Caco-2 (cell line): ENCODE measurements at regions of chr13 and their contacts with region 1.

Region 1: DNA sequence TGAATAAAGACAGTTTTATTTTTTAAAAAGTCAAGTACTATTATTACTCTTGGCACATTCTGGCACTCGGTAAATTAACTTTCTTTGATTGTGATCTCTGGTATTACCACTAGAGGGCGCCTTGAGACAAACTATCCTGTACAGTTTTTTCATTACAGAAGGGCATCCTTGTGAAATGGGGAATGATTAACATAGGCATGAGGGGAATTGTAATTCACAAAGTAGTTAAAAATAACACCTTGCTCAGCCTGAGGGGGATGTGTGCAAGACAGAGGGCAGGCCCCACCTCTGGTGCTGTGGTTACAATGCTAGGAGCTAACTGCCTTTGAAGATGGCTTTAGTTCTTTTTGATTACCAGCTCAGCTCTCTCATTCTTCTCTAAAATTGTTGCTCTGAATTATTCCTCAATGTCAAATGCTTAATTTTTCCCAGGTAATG is 24.2 kb upstream of the C1QTNF9B start:
- DNase-seq: peak in 1 of 2 experiments; percentile 63
- H3K4me3 ChIP-seq: no peak overlapping the region
- H3K4me3 Mint-ChIP-seq: no peak overlapping the region
- H3K27ac Mint-ChIP-seq: no peak overlapping the region
- H3K4me1 ChIP-seq: no peaks in the 10 kb centered on the region; the same call in 1 of the 2 replicates
- H3K4me1 Mint-ChIP-seq: no peaks in the 10 kb centered on the region
- H3K27me3 ChIP-seq: no peaks in the 10 kb centered on the region
- H3K27me3 Mint-ChIP-seq: peaks cover 25% of the 10 kb centered on the region
- CTCF ChIP-seq: peak; percentile 62 to 80

Region 2: GRCh38 chr13:23867027-23867491 is 54.4 kb before region 1 on chr13:
- CTCF ChIA-PET with region 1: no interaction called
- POLR2A ChIA-PET with region 1: no interaction called
- intact Hi-C with region 1: no loop called
- DNase-seq: no peak
- H3K4me3 ChIP-seq: no peak overlapping the region
- H3K4me3 Mint-ChIP-seq: no peak overlapping the region
- H3K27ac Mint-ChIP-seq: no peak overlapping the region
- H3K4me1 ChIP-seq: peaks cover 6% of the 10 kb centered on the region; the same call in 1 of the 2 replicates
- H3K4me1 Mint-ChIP-seq: no peaks in the 10 kb centered on the region
- H3K27me3 ChIP-seq: no peaks in the 10 kb centered on the region
- H3K27me3 Mint-ChIP-seq: no peaks in the 10 kb centered on the region
- CTCF ChIP-seq: no peak

Region 3: GRCh38 chr13:24005755-24006281 is 84.3 kb after region 1 on chr13:
- CTCF ChIA-PET with region 1: no interaction called
- POLR2A ChIA-PET with region 1: no interaction called
- intact Hi-C with region 1: loop called (anchors 5 kb)
- DNase-seq: peak; percentile 61 to 64
- H3K4me3 ChIP-seq: no peak overlapping the region
- H3K4me3 Mint-ChIP-seq: peak overlapping the region; percentile 65
- H3K27ac Mint-ChIP-seq: peak overlapping the region; percentile 89
- H3K4me1 ChIP-seq: peaks cover 67% of the 10 kb centered on the region
- H3K4me1 Mint-ChIP-seq: peaks cover 63% of the 10 kb centered on the region
- H3K27me3 ChIP-seq: no peaks in the 10 kb centered on the region
- H3K27me3 Mint-ChIP-seq: no peaks in the 10 kb centered on the region
- CTCF ChIP-seq: no peak

Region 4: GRCh38 chr13:24053519-24054251 is 132.2 kb after region 1 on chr13:
- CTCF ChIA-PET with region 1: no interaction called
- POLR2A ChIA-PET with region 1: no interaction called
- intact Hi-C with region 1: loop called (anchors 1 kb)
- DNase-seq: peak; percentile 82 to 85
- H3K4me3 ChIP-seq: no peak overlapping the region
- H3K4me3 Mint-ChIP-seq: no peak overlapping the region
- H3K27ac Mint-ChIP-seq: no peak overlapping the region
- H3K4me1 ChIP-seq: no peaks in the 10 kb centered on the region
- H3K4me1 Mint-ChIP-seq: peaks cover 13% of the 10 kb centered on the region
- H3K27me3 ChIP-seq: no peaks in the 10 kb centered on the region
- H3K27me3 Mint-ChIP-seq: no peaks in the 10 kb centered on the region
- CTCF ChIP-seq: peak; percentile 82 to 85

Region 5: DNA sequence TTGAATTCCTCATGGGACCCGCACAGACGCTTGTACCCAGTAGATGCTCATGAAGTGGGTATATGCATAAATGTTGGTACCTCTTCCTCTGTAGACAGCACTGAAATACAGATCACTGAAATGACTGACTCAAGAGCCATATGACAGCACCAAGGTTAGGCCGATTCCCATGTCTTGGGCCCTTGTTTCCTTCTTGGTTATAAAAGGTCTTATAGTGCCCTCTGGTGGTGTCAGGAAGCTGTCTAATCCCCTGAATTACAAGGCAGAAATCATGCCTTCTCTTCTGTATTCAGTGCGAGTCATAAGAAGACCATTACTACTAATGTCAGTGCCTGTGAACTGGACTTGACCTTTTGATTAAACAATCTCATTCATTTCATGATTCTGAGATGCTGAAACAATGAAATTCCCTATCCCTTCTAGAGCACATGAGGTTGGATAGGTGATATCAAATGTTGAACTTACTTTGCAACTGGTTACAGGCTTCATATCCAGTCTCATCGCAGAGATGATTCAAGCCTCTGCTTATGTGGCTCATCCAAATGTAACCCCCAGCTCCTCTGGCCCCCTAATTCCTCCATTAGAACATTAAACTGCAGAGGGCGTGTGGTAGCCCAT is 298.7 kb after region 1 on chr13:
- CTCF ChIA-PET with region 1: interaction called, 3 read pairs
- POLR2A ChIA-PET with region 1: no interaction called
- intact Hi-C with region 1: loop called (anchors 1 kb)
- DNase-seq: peak; percentile 64 to 82
- H3K4me3 ChIP-seq: no peak overlapping the region
- H3K4me3 Mint-ChIP-seq: no peak overlapping the region
- H3K27ac Mint-ChIP-seq: peak overlapping the region; percentile 80
- H3K4me1 ChIP-seq: peaks cover 17% of the 10 kb centered on the region
- H3K4me1 Mint-ChIP-seq: peaks cover 18% of the 10 kb centered on the region
- H3K27me3 ChIP-seq: no peaks in the 10 kb centered on the region
- H3K27me3 Mint-ChIP-seq: no peaks in the 10 kb centered on the region
- CTCF ChIP-seq: peak; percentile 69 to 71